AG04450 (cell line): ENCODE measurements at regions of chr16 and their contacts with region 1.

Region 1: DNA sequence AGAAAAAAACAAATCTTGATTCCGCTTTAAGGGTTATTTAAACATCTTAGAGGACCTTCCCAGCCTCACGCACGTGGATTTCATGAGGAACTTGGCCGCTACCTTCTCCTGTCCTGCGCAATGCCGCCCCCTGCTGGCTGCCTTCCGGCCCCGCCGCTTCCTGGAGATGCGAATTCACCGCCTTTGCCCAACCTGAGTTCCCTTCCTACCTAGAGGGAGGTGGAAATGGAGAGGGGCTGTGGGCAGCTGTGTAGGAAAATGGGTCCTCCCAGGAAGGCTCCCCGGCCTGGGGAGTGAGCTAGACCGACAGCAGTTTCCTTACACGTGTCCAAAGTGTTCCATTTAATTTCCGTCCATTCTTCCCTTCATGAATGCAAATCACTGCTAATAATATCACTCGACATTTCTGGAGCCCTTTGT is 1.0 kb upstream of the ABCC12 start:
- DNase-seq: peak; percentile 68
- H3K4me3 ChIP-seq: no peak overlapping the region
- H3K27ac ChIP-seq: no peak overlapping the region
- H3K27me3 ChIP-seq: no peaks in the 10 kb centered on the region
- CTCF ChIP-seq: peak; percentile 94

Region 2: GRCh38 chr16:47037746-47038458 is 1118.9 kb before region 1 on chr16:
- CTCF ChIA-PET with region 1: interaction called, 31 read pairs
- POLR2A ChIA-PET with region 1: no interaction called
- DNase-seq: peak; percentile 44
- H3K4me3 ChIP-seq: peak overlapping the region; percentile 66
- H3K27ac ChIP-seq: no peak overlapping the region
- H3K27me3 ChIP-seq: peaks cover 11% of the 10 kb centered on the region
- CTCF ChIP-seq: peak; percentile 88

Region 3: DNA sequence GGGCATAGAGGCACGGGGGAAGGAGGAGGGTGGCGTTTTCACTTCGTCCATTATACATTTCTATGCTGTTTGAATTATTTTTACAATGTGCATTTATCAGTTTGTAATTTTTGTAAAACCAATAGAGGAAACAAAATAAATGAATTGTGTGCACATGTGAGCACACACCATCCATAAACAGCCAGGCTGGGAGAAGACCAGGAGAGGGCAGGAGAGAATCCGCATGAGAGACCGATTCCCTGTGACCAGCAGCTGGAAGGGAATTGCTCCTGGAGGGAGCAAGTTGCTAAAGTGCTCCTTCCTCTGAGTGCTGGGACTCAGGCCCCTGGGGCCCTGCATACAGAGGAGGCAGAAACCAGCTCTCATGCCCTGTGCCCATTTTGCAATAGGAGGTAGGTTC is 127.0 kb before region 1 on chr16:
- CTCF ChIA-PET with region 1: no interaction called
- POLR2A ChIA-PET with region 1: no interaction called
- DNase-seq: no peak
- H3K4me3 ChIP-seq: no peak overlapping the region
- H3K27ac ChIP-seq: no peak overlapping the region
- H3K27me3 ChIP-seq: peaks cover 7% of the 10 kb centered on the region
- CTCF ChIP-seq: peak; percentile 21; the same call in 1 of the 2 replicates

Region 4: GRCh38 chr16:48054881-48055601 is 101.8 kb before region 1 on chr16:
- CTCF ChIA-PET with region 1: interaction called, 11 read pairs
- POLR2A ChIA-PET with region 1: no interaction called
- DNase-seq: peak; percentile 36
- H3K4me3 ChIP-seq: peak overlapping the region; percentile 32
- H3K27ac ChIP-seq: no peak overlapping the region
- H3K27me3 ChIP-seq: no peaks in the 10 kb centered on the region
- CTCF ChIP-seq: peak; percentile 98

Region 5: DNA sequence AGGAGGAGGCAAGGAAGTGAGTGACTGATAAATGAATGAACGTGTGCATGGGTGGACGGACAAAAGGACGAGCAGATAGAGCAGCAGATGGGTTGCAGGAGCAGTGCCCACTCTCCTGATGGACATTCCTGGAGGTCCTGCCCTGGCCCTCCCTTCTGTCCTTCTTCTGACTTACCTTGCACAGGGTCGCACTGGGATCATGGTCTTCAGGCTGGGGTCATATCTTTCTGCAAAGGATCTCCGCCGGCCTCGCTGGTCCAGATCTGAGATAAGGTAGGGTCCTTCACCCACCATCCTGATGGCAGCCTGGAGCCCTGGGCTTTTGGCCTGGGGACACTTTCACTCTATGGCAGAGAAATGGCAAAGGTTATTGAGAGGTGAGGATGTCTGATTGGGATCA is 10.7 kb before region 1 on chr16:
- CTCF ChIA-PET with region 1: interaction called, 10 read pairs
- POLR2A ChIA-PET with region 1: no interaction called
- DNase-seq: no peak
- H3K4me3 ChIP-seq: no peak overlapping the region
- H3K27ac ChIP-seq: no peak overlapping the region
- H3K27me3 ChIP-seq: no peaks in the 10 kb centered on the region
- CTCF ChIP-seq: no peak